ENCODE measurements at regions of chr20 and their contacts with region 1.

Region 1: DNA sequence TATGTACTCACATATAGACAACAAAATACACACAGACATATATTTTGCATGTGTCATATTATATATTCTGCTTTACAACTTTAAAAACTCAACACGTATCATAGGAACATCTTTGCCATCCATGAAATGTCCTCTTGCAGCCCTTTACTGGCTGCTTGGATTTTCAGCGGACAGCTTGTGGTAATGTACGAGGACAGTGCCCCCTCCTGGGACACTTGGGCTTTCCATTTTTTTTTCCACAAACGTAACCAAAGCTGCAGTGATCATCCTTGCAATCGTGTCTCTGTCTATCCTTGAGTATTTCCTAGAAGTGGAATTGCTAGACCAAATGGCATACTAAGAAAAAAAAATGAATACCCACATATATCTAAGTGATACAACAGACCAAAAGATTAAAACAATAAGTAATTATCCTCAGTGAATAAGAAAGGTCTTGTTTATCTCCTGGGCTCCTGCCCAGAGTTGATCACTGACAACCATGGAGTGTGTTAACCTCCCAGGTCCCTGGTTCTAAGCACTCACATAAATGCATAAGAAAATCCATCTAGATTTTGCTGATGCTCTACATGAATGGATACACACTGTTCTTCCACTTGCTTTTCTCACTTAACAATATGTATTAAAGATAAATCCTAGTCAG is 18.1 kb downstream of the BPI start:
- DNase-seq: peak in 1 of 2 donors; percentile 44
- ATAC-seq: peak in 5 of 8 donors; percentile 48 to 80 (median 57)
- H3K4me3 ChIP-seq: no peak overlapping the region
- H3K27ac ChIP-seq: no peak overlapping the region
- H3K4me1 ChIP-seq: no peaks in the 10 kb centered on the region
- H3K27me3 ChIP-seq: peaks cover 0 to 18% (median 3%) of the 10 kb centered on the region in 7 donors
- CTCF ChIP-seq: peak in 8 of 9 donors; percentile 32 to 76 (median 68)

Region 2: DNA sequence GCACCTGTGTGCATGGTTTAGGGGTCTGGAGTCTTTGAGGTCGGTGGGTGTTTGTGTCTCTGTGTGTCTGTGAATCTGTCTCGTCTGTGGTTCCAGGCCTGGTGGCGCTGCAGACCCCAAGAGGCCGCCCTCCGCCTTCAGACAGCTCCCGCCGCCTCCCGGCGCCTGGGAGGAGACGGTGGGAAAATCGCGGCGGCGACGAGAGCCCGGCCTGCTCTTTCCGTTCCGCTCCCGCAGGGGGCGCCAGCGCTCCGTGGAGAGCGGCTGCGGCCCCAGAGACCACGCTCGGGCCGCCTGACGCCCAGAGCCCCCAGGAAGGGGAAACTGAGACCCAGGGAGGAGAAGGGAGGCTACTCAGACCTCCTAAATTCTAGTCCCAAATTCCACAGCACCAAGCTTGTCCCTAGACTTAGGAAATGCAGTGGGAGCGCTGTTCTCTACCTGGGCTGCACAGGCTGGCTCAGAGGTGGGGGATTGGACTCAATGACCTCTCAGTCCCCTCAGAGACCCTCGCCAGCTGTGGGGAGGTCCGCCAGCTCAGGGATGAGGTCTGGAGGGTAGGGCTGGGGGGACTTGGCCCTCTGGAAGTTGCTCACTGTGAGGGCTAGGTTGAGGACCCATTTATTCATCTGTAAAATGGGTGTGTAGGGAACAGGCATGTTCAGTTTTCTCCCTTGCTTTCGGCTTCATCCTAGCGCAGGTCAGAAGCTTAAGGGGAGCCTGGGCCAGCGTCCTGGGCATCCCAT is 757.5 kb before region 1 on chr20:
- intact Hi-C with region 1: loop called in 1 of 10 experiments (anchors 10 kb)
- DNase-seq: peak; percentile 16 to 49
- ATAC-seq: peak in 7 of 8 donors; percentile 50 to 81 (median 72)
- H3K4me3 ChIP-seq: no peak overlapping the region
- H3K27ac ChIP-seq: no peak overlapping the region
- H3K4me1 ChIP-seq: peaks cover 0 to 7% (median 5%) of the 10 kb centered on the region in 9 donors
- H3K27me3 ChIP-seq: peaks cover 0 to 83% (median 61%) of the 10 kb centered on the region in 7 donors
- CTCF ChIP-seq: peak; percentile 83 to 95 (median 91)

Region 3: DNA sequence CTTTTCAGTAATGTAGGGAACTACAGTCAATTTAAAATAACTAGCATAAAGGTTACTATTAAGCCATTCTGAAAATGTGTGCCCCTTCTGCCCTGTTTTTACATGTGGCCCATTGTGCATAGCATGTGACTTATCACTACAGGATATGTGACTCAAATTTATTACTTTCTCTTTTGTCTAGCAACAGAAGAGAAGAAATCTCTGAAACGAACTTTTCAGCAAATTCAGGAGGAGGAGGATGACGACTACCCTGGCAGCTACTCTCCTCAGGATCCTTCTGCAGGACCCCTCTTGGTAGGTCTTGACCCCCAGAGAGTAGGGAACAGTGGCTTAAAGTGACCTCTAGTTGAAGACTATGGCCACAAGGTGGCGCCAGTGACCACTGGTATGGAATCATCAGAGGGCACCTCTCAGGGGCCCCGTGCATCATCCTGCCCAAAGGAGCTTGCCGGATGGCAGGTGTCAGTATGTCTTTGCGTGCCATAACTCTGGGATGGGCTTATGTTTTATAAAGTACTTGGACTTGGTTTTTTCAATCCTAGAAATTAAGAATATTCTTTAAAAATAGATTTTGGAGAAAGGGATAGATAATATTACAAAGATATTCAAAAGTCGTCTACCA is 264.6 kb before region 1 on chr20:
- intact Hi-C with region 1: loop called in 3 of 10 experiments (anchors 5 kb)
- DNase-seq: peak; percentile 83 to 86
- ATAC-seq: peak; percentile 87 to 95 (median 92)
- H3K4me3 ChIP-seq: no peak overlapping the region
- H3K27ac ChIP-seq: peak overlapping the region in 3 of 10 donors; percentile 10 to 60 (median 42)
- H3K4me1 ChIP-seq: peaks cover 0 to 39% (median 13%) of the 10 kb centered on the region in 9 donors
- H3K27me3 ChIP-seq: no peaks in the 10 kb centered on the region
- CTCF ChIP-seq: peak; percentile 82 to 98 (median 91)

Region 4: GRCh38 chr20:38229376-38230252 is 92.5 kb before region 1 on chr20:
- intact Hi-C with region 1: loop called in 7 of 10 experiments (anchors 2 to 10 kb)
- DNase-seq: no peak
- ATAC-seq: peak in 5 of 8 donors; percentile 2 to 33 (median 17)
- H3K4me3 ChIP-seq: no peak overlapping the region
- H3K27ac ChIP-seq: no peak overlapping the region
- H3K4me1 ChIP-seq: peaks cover 0 to 14% (median 9%) of the 10 kb centered on the region in 9 donors
- H3K27me3 ChIP-seq: peaks cover 0 to 5% (median 0%) of the 10 kb centered on the region in 7 donors
- CTCF ChIP-seq: peak; percentile 16 to 65 (median 51)

Region 5: GRCh38 chr20:38406476-38406875 is 84.4 kb after region 1 on chr20:
- intact Hi-C with region 1: loop called in 1 of 10 experiments (anchors 5 kb)
- DNase-seq: no peak
- ATAC-seq: no peak
- H3K4me3 ChIP-seq: no peak overlapping the region
- H3K27ac ChIP-seq: no peak overlapping the region
- H3K4me1 ChIP-seq: no peaks in the 10 kb centered on the region
- H3K27me3 ChIP-seq: peaks cover 0 to 7% (median 0%) of the 10 kb centered on the region in 7 donors
- CTCF ChIP-seq: no peak

Measured in heart right ventricle (tissue), 16 donors.